Endothelial cell of umbilical vein (primary cell): ENCODE measurements at regions of chr4 and their contacts with region 1.

Region 1: GRCh38 chr4:2262143-2262943 is 434 bp upstream of the MXD4 start:
- DNase-seq: peak; percentile 100
- H3K4me3 ChIP-seq: peak overlapping the region; percentile 47 to 70 (median 58)
- H3K27ac ChIP-seq: peak overlapping the region; percentile 66
- H3K4me1 ChIP-seq: peaks cover 12% of the 10 kb centered on the region
- H3K27me3 ChIP-seq: no peaks in the 10 kb centered on the region
- CTCF ChIP-seq: no peak
- POLR2A ChIP-seq: peak; percentile 91

Region 2: GRCh38 chr4:2226261-2226660 is 36.1 kb before region 1 on chr4:
- CTCF ChIA-PET with region 1: no interaction called
- POLR2A ChIA-PET with region 1: no interaction called
- dilution Hi-C with region 1: no loop called
- intact Hi-C with region 1: no loop called
- DNase-seq: no peak
- H3K4me3 ChIP-seq: no peak overlapping the region
- H3K27ac ChIP-seq: no peak overlapping the region
- H3K4me1 ChIP-seq: no peaks in the 10 kb centered on the region
- H3K27me3 ChIP-seq: no peaks in the 10 kb centered on the region
- CTCF ChIP-seq: no peak
- POLR2A ChIP-seq: no peak

Region 3: GRCh38 chr4:2241410-2242353 is 20.7 kb before region 1 on chr4 and contains the starts of genes HAUS3 and POLN:
- CTCF ChIA-PET with region 1: interaction called, 3 read pairs
- POLR2A ChIA-PET with region 1: interaction called, 5 read pairs
- dilution Hi-C with region 1: no loop called
- intact Hi-C with region 1: loop called (anchors 1 kb)
- DNase-seq: peak; percentile 98
- H3K4me3 ChIP-seq: peak within 1 kb of the TSS; percentile 63 to 97 (median 97)
- H3K27ac ChIP-seq: peak within 1 kb of the TSS; percentile 30
- H3K4me1 ChIP-seq: peaks cover 33% of the 10 kb centered on the region
- H3K27me3 ChIP-seq: no peaks in the 10 kb centered on the region
- CTCF ChIP-seq: no peak
- POLR2A ChIP-seq: peak; percentile 72
- total RNA-seq, gene HAUS3: 15.9 and 16.0 TPM in 2 replicates
- total RNA-seq, gene POLN: 3.1 and 4.2 TPM in 2 replicates

Region 4: GRCh38 chr4:2412885-2413716 is 150.8 kb after region 1 on chr4:
- CTCF ChIA-PET with region 1: interaction called, 4 read pairs
- POLR2A ChIA-PET with region 1: no interaction called
- dilution Hi-C with region 1: no loop called
- intact Hi-C with region 1: loop called (anchors 1 kb)
- DNase-seq: peak; percentile 96
- H3K4me3 ChIP-seq: peak overlapping the region in 2 of 3 experiments; percentile 18 to 22
- H3K27ac ChIP-seq: peak overlapping the region; percentile 77
- H3K4me1 ChIP-seq: peaks cover 43% of the 10 kb centered on the region
- H3K27me3 ChIP-seq: no peaks in the 10 kb centered on the region
- CTCF ChIP-seq: peak; percentile 49 to 69
- POLR2A ChIP-seq: no peak

Region 5: GRCh38 chr4:2418650-2419571 is 156.6 kb after region 1 on chr4 and contains the start of gene CFAP99:
- CTCF ChIA-PET with region 1: no interaction called
- POLR2A ChIA-PET with region 1: no interaction called
- dilution Hi-C with region 1: no loop called
- intact Hi-C with region 1: loop called (anchors 1 kb)
- DNase-seq: peak; percentile 93
- H3K4me3 ChIP-seq: peak within 1 kb of the TSS; percentile 62 to 78 (median 66)
- H3K27ac ChIP-seq: peak within 1 kb of the TSS; percentile 13
- H3K4me1 ChIP-seq: peaks cover 33% of the 10 kb centered on the region
- H3K27me3 ChIP-seq: peaks cover 19 to 21% of the 10 kb centered on the region in 2 experiments
- CTCF ChIP-seq: peak in 1 of 2 donors; percentile 26
- POLR2A ChIP-seq: no peak
- total RNA-seq, gene CFAP99: 0.12 TPM in 1 of 2 replicates, not detected in the other

Region 6: GRCh38 chr4:2462218-2462991 is 200.1 kb after region 1 on chr4:
- CTCF ChIA-PET with region 1: no interaction called
- POLR2A ChIA-PET with region 1: no interaction called
- dilution Hi-C with region 1: no loop called
- intact Hi-C with region 1: loop called (anchors 2 kb)
- DNase-seq: peak; percentile 75
- H3K4me3 ChIP-seq: peak overlapping the region in 2 of 3 experiments; percentile 20 to 29
- H3K27ac ChIP-seq: no peak overlapping the region
- H3K4me1 ChIP-seq: peaks cover 7% of the 10 kb centered on the region
- H3K27me3 ChIP-seq: no peaks in the 10 kb centered on the region
- CTCF ChIP-seq: peak; percentile 37 to 48
- POLR2A ChIP-seq: no peak